ENCODE measurements at regions of chr3 and their contacts with region 1.

Region 1: GRCh38 chr3:97821810-97822775 is at the start of gene CRYBG3:
- DNase-seq: peak; percentile 77 to 91
- H3K4me3 ChIP-seq: peak within 1 kb of the TSS; percentile 77 to 91
- H3K27ac ChIP-seq: peak within 1 kb of the TSS; percentile 85 to 92
- H3K4me1 ChIP-seq: peaks cover 0 to 21% (median 3%) of the 10 kb centered on the region in 4 donors
- H3K27me3 ChIP-seq: no peaks in the 10 kb centered on the region
- CTCF ChIP-seq: peak in 1 of 2 experiments; percentile 18

Region 2: DNA sequence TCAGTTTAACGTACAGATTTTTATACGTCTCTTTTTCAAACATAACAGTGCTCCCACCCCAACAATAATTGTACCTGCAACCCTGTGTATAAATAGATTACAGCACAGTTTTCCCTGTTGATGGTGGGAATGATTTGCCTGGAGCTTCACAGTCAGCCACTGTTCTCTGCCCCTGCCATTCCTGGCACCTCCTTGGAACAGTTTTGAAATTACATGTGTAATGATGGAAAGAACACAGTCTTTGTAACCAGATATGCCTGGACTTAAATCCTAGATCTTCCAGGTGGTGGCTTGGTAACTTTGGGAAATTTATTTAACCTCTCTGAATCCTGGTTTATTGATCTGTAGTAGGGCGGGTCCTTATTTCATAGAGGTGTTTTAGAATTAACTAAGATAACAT is 26.7 kb after region 1 on chr3:
- intact Hi-C with region 1: no loop called
- DNase-seq: no peak
- H3K4me3 ChIP-seq: no peak overlapping the region
- H3K27ac ChIP-seq: no peak overlapping the region
- H3K4me1 ChIP-seq: no peaks in the 10 kb centered on the region
- H3K27me3 ChIP-seq: no peaks in the 10 kb centered on the region
- CTCF ChIP-seq: no peak

Region 3: GRCh38 chr3:97871801-97872524 is 49.9 kb after region 1 on chr3:
- intact Hi-C with region 1: no loop called
- DNase-seq: no peak
- H3K4me3 ChIP-seq: no peak overlapping the region
- H3K27ac ChIP-seq: peak overlapping the region; percentile 35 to 51
- H3K4me1 ChIP-seq: peaks cover 0 to 5% (median 0%) of the 10 kb centered on the region in 4 donors
- H3K27me3 ChIP-seq: no peaks in the 10 kb centered on the region
- CTCF ChIP-seq: no peak

Region 4: GRCh38 chr3:97971677-97972567 is 149.8 kb after region 1 on chr3 and contains the start of gene RIOX2:
- intact Hi-C with region 1: loop called (anchors 10 kb)
- DNase-seq: peak; percentile 57 to 80
- H3K4me3 ChIP-seq: peak within 1 kb of the TSS; percentile 76 to 93
- H3K27ac ChIP-seq: peak within 1 kb of the TSS; percentile 82 to 91
- H3K4me1 ChIP-seq: peaks cover 0 to 11% (median 0%) of the 10 kb centered on the region in 4 donors
- H3K27me3 ChIP-seq: no peaks in the 10 kb centered on the region
- CTCF ChIP-seq: no peak